GM10248 (cell line): ENCODE measurements at regions of chr13 and their contacts with region 1.

Region 1: GRCh38 chr13:50801087-50801931 is 42.2 kb downstream of the DLEU7 start:
- DNase-seq: peak; percentile 58
- CTCF ChIP-seq: peak; percentile 80

Region 2: DNA sequence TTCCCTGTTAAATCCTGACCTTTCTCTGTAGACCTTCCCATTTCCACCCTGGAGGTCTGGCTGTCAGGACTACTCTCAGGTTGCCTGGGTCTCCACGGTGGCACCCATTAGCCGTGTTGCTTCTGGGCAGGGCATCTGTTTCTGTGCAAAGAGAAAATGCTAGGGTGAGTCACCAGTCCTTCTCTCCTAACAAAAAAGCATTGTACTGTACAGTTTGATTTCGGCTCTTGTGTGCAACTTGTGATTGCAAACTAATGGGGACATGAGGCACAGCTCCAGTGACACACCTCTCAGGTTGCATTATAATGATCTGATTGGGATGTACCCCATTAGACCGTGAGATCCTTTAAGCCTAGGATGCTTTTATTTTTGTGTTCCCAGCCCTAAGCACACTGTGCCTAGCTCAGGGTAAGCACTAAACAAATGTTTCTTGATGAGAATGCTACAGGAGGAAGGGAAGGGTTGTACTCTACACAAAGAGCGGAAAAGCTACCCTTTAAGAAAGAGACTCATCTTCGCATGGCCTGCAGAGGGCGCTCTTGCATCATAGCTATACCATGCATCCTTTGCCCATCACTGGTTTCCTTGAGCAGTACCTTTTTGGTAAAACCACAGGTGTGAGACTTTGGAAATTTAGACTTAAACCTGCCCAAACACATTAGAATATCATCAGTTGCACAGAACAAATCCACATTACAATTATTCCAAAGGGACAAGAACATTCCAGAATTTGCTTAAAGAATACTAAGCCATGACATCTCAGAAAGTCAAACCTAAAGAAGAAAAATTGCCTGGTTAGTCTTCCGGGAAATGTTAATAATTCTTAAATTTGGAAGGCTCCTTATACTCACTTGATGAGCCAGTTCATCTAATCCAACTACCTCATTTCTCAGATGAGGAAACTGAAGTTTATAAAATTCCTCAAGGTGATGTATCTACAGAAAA is 824.7 kb before region 1 on chr13:
- CTCF ChIA-PET with region 1: interaction called, 24 read pairs
- POLR2A ChIA-PET with region 1: no interaction called
- DNase-seq: peak; percentile 74
- CTCF ChIP-seq: peak; percentile 78

Region 3: DNA sequence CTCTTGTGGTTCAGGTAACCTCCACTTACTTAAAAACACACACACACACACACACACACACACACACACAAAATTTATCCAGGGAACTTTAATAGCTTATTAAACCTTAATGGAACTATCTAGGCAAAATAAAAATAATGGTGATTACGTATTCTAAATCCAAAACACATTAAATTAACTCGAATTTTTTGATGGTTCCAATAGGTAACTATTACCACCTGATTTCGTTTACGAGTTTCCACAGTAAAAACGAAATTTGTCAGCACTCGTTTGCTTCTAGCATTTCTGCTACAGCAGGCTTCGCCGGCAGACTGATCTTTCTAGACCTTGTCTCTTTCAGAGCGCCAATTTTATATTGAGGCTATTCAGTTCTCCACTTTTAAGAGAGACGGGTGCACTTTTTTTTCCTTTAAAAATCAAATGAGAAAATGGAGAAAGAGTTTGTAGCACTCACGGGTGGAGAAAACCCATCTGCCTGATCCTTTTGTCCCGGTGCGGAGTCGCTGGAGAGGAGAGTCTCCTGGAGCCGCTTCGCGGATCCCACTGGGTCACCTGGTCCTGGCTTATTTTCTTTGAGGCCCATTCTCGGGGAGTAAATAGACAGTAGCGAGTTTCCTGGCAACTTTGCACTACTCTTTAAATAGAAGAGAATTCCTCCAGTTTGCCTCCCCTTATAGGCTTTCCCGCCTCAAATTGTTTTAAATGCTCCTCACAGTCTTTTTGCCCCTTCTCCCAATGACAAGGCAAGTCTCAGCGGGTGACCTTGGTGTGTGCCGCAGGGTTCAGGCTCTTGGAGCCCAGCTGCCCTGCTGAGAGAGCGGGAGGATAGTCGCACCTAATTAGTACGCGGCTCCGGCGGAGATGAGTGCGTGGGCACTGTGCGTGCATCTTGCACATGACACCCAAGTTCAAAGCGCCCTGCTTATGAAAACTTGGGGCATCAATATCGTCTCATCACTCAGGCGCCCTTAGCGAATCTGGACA is 669.1 kb before region 1 on chr13:
- CTCF ChIA-PET with region 1: no interaction called
- POLR2A ChIA-PET with region 1: no interaction called
- DNase-seq: no peak
- CTCF ChIP-seq: no peak

Region 4: GRCh38 chr13:50783717-50784290 is 17.5 kb before region 1 on chr13:
- CTCF ChIA-PET with region 1: interaction called, 11 read pairs
- POLR2A ChIA-PET with region 1: no interaction called
- DNase-seq: no peak
- CTCF ChIP-seq: no peak

Region 5: DNA sequence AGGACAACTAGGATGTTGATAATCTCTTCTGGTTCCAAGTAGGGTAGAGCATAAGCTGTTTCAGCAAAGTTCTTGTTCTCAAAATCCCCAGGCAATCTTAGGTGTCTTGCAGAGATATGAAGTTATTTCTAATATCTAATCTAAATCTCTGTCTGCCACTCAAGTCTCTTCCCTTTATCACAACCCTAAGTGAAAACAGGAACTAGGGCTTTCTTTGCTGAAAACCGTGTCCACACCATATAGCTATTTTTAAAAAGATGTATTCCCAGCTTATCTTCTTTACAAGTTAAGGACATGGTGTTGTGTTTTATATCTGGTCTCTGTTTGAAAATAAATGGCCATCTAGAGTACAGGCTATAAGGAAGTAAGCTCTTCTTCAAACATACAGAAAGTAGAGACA is 97.0 kb after region 1 on chr13:
- CTCF ChIA-PET with region 1: no interaction called
- POLR2A ChIA-PET with region 1: no interaction called
- DNase-seq: no peak
- CTCF ChIP-seq: no peak